Right lobe of liver (tissue), 6 donors: ENCODE measurements at regions of chr20 and their contacts with region 1.

Region 1: GRCh38 chr20:5557123-5557522 is 193.1 kb upstream of the SHLD1 start:
- DNase-seq: peak in 1 of 3 donors; percentile 32
- ATAC-seq: peak; percentile 74 to 85 (median 79)
- H3K4me3 ChIP-seq: no peak overlapping the region
- H3K27ac ChIP-seq: no peak overlapping the region
- H3K4me1 ChIP-seq: no peaks in the 10 kb centered on the region
- H3K27me3 ChIP-seq: no peaks in the 10 kb centered on the region
- CTCF ChIP-seq: peak; percentile 49 to 66 (median 58)
- POLR2A ChIP-seq: no peak

Region 2: DNA sequence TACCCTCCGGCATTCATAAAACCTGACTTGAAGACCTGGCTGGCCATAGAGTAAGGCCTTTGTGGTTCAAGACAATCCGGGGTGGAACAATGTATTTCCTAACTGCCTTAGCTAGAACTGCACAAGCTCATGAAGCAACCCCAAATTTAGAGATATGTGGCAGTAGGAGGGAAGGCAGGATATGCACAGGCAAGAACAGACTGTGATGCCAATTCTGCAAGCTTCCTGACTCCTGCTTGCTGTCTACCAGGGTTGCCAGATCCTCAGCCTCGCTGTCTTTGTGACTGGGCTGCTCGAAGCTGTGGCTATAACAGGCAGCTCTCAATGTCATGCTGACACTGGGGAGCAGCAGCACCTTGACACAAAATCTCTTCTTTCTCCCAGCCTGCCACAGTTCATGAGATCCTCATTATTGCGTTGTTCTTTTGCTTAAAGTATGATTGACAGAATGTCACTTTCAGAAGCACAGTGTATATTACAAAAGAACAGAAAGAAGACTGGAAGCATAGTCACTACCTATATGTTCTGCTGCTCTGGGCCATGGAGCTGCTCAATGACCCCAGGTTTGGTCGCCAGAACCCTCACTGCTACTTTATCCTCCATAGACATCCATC is 174.7 kb after region 1 on chr20:
- intact Hi-C with region 1: no loop called
- DNase-seq: no peak
- ATAC-seq: no peak
- H3K4me3 ChIP-seq: no peak overlapping the region
- H3K27ac ChIP-seq: no peak overlapping the region
- H3K4me1 ChIP-seq: no peaks in the 10 kb centered on the region
- H3K27me3 ChIP-seq: no peaks in the 10 kb centered on the region
- CTCF ChIP-seq: no peak
- POLR2A ChIP-seq: no peak

Region 3: GRCh38 chr20:5788385-5788895 is 231.3 kb after region 1 on chr20:
- intact Hi-C with region 1: loop called in 1 of 2 experiments (anchors 10 kb)
- DNase-seq: peak; percentile 59 to 77 (median 70)
- ATAC-seq: peak; percentile 97 to 99 (median 98)
- H3K4me3 ChIP-seq: no peak overlapping the region
- H3K27ac ChIP-seq: no peak overlapping the region
- H3K4me1 ChIP-seq: peaks cover 0 to 15% (median 7%) of the 10 kb centered on the region in 4 donors
- H3K27me3 ChIP-seq: no peaks in the 10 kb centered on the region
- CTCF ChIP-seq: peak; percentile 86 to 94 (median 91)
- POLR2A ChIP-seq: no peak